Caco-2 (cell line): ENCODE measurements at regions of chr1 and their contacts with region 1.

Region 1: GRCh38 chr1:84573967-84574842 is at the start of gene CTBS:
- DNase-seq: peak; percentile 82 to 86
- H3K4me3 ChIP-seq: peak within 1 kb of the TSS; percentile 67
- H3K4me3 Mint-ChIP-seq: peak within 1 kb of the TSS; percentile 89
- H3K27ac Mint-ChIP-seq: peak within 1 kb of the TSS; percentile 85
- H3K4me1 ChIP-seq: peaks cover 8% of the 10 kb centered on the region; the same call in 1 of the 2 replicates
- H3K4me1 Mint-ChIP-seq: no peaks in the 10 kb centered on the region
- H3K27me3 ChIP-seq: no peaks in the 10 kb centered on the region
- H3K27me3 Mint-ChIP-seq: peaks cover 2% of the 10 kb centered on the region
- CTCF ChIP-seq: no peak
- total RNA-seq, gene CTBS: 4.7 and 5.4 TPM in 2 replicates

Region 2: DNA sequence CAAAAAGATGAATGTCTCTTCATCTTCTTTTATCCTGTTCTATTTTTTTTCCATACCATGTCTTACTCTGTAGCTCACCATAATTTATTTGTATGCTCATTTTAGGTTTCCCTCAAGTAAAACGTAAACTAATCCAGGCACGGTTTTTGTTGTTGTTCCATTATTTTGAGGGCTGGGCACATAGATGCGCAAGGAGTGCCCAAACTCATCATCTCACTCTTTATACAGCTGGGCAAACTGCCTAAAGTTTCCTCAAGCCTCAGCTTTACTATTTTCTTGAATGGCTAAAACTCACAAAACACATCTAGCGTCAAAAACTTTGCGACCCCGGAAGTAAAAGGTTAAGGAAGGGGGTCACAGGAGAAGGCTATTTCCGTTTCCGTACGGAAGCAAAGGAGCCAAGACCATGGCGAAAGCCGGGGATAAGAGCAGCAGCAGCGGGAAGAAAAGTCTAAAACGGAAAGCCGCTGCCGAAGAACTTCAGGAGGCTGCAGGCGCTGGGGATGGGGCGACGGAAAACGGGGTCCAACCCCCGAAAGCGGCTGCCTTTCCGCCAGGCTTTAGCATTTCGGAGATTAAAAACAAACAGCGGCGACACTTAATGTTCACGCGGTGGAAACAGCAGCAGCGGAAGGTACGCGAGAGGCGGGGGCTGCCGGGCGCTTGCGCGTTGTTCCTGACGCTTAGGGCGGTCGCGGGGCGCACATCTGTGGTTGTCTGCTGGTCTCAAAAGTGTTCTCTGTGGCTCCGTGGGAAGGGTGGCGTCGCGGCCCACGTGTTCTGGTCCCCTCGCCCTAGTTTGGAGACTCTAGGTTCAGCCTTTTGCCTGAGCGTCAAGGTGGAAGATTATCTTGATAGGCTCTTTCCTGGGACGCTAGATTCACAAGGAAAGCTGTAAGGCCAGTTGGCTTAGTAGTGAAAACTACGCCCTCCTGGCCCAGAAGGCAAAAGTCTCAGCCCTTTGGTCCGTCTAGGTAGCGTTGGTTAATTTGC is 95.0 kb before region 1 on chr1 and contains the start of gene RPF1:
- CTCF ChIA-PET with region 1: no interaction called
- POLR2A ChIA-PET with region 1: no interaction called
- intact Hi-C with region 1: loop called (anchors 1 kb)
- DNase-seq: peak; percentile 64 to 67
- H3K4me3 ChIP-seq: peak within 1 kb of the TSS; percentile 55
- H3K4me3 Mint-ChIP-seq: peak within 1 kb of the TSS; percentile 98
- H3K27ac Mint-ChIP-seq: peak within 1 kb of the TSS; percentile 99
- H3K4me1 ChIP-seq: no peaks in the 10 kb centered on the region
- H3K4me1 Mint-ChIP-seq: no peaks in the 10 kb centered on the region
- H3K27me3 ChIP-seq: no peaks in the 10 kb centered on the region
- H3K27me3 Mint-ChIP-seq: peaks cover 15% of the 10 kb centered on the region
- CTCF ChIP-seq: no peak
- total RNA-seq, gene RPF1: 15.7 and 18.2 TPM in 2 replicates